ENCODE measurements at regions of chr22 and their contacts with region 1.

Region 1: DNA sequence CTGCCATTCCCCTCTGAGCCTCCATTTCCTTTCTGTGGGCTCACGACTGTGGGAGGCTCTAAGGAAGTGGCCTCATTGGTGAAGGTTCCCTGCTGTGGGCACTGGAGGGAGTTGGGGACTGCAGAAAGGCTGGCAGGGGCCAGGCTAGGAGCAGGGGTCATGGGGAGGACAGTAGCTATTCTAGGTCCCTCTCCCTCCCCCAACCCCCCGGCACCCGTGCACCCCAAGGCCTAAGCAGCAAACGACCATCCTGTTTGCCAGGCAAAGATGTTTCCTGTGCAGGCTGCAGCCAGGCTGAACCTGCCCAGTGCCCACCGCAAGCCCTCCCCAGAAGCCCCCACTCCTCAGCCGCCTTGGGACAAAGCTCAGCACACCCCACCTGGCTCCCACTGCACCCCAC is 189.4 kb downstream of the MN1 start:
- DNase-seq: peak; percentile 91 to 99 (median 99)
- H3K4me3 ChIP-seq: no peak overlapping the region
- H3K27ac ChIP-seq: peak overlapping the region; percentile 30 to 34
- H3K4me1 ChIP-seq: peaks cover 4 to 53% (median 50%) of the 10 kb centered on the region in 4 experiments
- H3K27me3 ChIP-seq: no peaks in the 10 kb centered on the region

Region 2: DNA sequence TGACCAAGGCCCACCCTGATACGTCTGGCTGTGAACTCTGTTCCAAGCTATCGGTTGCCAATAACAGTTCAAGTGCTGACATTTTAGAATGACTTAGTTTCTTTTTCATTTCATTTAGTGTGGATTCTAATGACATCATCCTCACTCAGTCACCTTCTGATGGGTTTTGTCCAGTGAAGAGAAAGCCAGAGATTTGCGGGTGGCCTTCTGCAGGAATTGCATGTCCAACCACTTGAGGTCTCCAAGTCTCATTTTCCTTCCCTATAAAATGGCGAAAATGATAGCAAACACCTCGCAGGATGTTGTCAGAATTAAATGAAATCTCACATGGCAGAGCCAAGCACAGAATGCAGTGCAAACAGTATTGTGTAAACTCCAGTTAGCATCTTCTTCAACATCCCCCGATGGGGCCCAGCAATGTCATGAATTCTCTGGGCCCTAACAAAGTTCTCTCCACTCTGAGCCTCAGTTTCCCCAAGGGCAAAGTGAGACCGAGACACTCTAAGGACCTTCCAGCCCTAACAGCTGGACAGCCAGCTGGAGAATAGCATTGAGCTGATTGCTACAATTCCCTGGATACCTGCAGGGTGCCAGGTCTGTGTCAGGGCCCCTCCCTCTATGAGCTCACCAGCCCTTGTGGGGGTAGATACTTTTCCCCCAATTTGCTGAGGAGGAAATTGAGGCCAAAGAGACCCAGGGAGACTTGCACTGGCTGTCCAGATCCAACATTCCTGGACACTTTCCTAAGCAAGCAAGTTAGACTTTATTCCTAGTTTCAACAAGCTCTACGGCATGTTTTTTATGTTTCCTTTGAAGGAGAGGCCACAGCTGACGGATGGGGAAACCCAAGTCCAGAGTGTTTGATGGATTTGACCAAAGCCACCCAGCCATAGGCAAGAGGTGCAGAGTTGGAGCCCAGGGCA is 97.3 kb before region 1 on chr22:
- CTCF ChIA-PET with region 1: no interaction called
- POLR2A ChIA-PET with region 1: no interaction called
- DNase-seq: no peak
- H3K4me3 ChIP-seq: no peak overlapping the region
- H3K27ac ChIP-seq: no peak overlapping the region
- H3K4me1 ChIP-seq: peaks cover 0 to 7% (median 3%) of the 10 kb centered on the region in 4 experiments
- H3K27me3 ChIP-seq: no peaks in the 10 kb centered on the region

Region 3: GRCh38 chr22:27668828-27669797 is 57.0 kb after region 1 on chr22:
- CTCF ChIA-PET with region 1: interaction called, 14 read pairs
- POLR2A ChIA-PET with region 1: interaction called, 9 read pairs
- DNase-seq: peak; percentile 97 to 100 (median 100)
- H3K4me3 ChIP-seq: peak overlapping the region in 3 of 7 experiments; percentile 6 to 11 (median 9)
- H3K27ac ChIP-seq: peak overlapping the region; percentile 35 to 80
- H3K4me1 ChIP-seq: peaks cover 6 to 65% (median 53%) of the 10 kb centered on the region in 4 experiments
- H3K27me3 ChIP-seq: no peaks in the 10 kb centered on the region

Region 4: GRCh38 chr22:27782088-27782487 is 170.0 kb after region 1 on chr22:
- CTCF ChIA-PET with region 1: interaction called, 10 read pairs
- POLR2A ChIA-PET with region 1: no interaction called
- DNase-seq: no peak
- H3K4me3 ChIP-seq: no peak overlapping the region
- H3K27ac ChIP-seq: no peak overlapping the region
- H3K4me1 ChIP-seq: peaks cover 7 to 72% (median 49%) of the 10 kb centered on the region in 4 experiments
- H3K27me3 ChIP-seq: no peaks in the 10 kb centered on the region

Region 5: DNA sequence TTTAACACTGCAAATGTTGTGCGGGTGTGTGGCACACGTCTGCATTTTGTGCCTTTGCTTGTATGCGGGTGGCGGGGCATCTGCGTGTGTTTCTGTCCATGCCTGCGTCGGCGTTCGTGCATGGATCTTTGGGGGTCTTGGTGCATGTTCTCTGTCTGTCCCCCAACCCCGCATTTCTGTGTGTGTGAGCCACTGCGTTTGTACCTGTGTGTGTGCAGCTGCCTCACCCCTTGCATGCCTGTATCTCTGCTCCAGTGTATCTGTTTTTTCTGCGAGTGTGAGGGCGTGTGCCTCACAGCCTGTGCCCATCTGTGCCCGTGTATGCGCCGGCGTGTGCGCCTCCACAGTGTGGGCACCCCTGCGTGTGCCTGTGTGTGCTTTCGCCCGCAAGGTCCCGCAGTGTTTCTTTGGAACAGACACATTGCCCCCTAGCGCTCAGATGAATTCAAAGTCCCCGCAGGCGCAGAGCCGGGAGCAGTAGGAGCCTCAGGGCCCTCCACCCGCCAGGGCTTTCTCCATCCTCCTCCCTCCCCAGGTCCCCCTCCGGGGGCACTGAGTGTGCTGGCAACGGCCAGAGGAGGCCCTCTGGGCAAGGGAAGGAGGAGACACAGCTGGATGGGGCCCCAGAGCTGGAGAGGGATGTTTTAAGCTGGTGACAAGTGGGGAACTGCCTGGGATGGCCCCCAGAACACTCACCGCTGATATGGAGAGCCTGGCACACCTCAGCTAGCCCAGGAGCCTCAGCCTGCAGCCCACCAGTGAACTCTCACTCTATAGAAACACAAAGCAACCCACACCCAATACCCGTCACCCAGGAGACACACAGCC is 192.6 kb after region 1 on chr22:
- CTCF ChIA-PET with region 1: interaction called, 13 read pairs
- POLR2A ChIA-PET with region 1: interaction called, 6 read pairs
- DNase-seq: peak; percentile 79 to 84 (median 83)
- H3K4me3 ChIP-seq: peak overlapping the region in 3 of 7 experiments; percentile 51 to 60 (median 53)
- H3K27ac ChIP-seq: no peak overlapping the region
- H3K4me1 ChIP-seq: peaks cover 3 to 52% (median 38%) of the 10 kb centered on the region in 4 experiments
- H3K27me3 ChIP-seq: no peaks in the 10 kb centered on the region